ENCODE measurements at regions of chr11 and their contacts with region 1.

Region 1: GRCh38 chr11:43880640-43881159 is at the start of gene ALKBH3:
- DNase-seq: peak; percentile 86 to 96 (median 90)
- ATAC-seq: peak; percentile 98
- H3K4me3 ChIP-seq: peak within 1 kb of the TSS; percentile 81
- H3K4me3 Mint-ChIP-seq: peak within 1 kb of the TSS; percentile 91
- H3K27ac ChIP-seq: peak within 1 kb of the TSS in 1 of 2 donors; percentile 39
- H3K27ac Mint-ChIP-seq: peak within 1 kb of the TSS; percentile 71
- H3K4me1 ChIP-seq: peaks cover 15% of the 10 kb centered on the region
- H3K4me1 Mint-ChIP-seq: peaks cover 26% of the 10 kb centered on the region
- H3K27me3 ChIP-seq: peaks cover 11 to 22% of the 10 kb centered on the region in 2 experiments
- H3K27me3 Mint-ChIP-seq: peaks cover 23% of the 10 kb centered on the region
- CTCF ChIP-seq: no peak
- total RNA-seq, gene ALKBH3: 16.7 to 17.2 TPM

Region 2: GRCh38 chr11:43311791-43312607 is 568.7 kb before region 1 on chr11 and contains the start of gene API5:
- CTCF ChIA-PET with region 1: no interaction called
- POLR2A ChIA-PET with region 1: interaction called, 9 read pairs
- intact Hi-C with region 1: loop called in 1 of 2 experiments (anchors 5 kb)
- DNase-seq: peak; percentile 85 to 96 (median 90)
- ATAC-seq: peak; percentile 93
- H3K4me3 ChIP-seq: peak within 1 kb of the TSS; percentile 86
- H3K4me3 Mint-ChIP-seq: peak within 1 kb of the TSS; percentile 93
- H3K27ac ChIP-seq: peak within 1 kb of the TSS; percentile 45 to 71
- H3K27ac Mint-ChIP-seq: peak within 1 kb of the TSS; percentile 88
- H3K4me1 ChIP-seq: peaks cover 24% of the 10 kb centered on the region
- H3K4me1 Mint-ChIP-seq: peaks cover 55% of the 10 kb centered on the region
- H3K27me3 ChIP-seq: no peaks in the 10 kb centered on the region
- H3K27me3 Mint-ChIP-seq: no peaks in the 10 kb centered on the region
- CTCF ChIP-seq: peak; percentile 92
- total RNA-seq, gene API5: 67.8 to 70.3 TPM

Region 3: DNA sequence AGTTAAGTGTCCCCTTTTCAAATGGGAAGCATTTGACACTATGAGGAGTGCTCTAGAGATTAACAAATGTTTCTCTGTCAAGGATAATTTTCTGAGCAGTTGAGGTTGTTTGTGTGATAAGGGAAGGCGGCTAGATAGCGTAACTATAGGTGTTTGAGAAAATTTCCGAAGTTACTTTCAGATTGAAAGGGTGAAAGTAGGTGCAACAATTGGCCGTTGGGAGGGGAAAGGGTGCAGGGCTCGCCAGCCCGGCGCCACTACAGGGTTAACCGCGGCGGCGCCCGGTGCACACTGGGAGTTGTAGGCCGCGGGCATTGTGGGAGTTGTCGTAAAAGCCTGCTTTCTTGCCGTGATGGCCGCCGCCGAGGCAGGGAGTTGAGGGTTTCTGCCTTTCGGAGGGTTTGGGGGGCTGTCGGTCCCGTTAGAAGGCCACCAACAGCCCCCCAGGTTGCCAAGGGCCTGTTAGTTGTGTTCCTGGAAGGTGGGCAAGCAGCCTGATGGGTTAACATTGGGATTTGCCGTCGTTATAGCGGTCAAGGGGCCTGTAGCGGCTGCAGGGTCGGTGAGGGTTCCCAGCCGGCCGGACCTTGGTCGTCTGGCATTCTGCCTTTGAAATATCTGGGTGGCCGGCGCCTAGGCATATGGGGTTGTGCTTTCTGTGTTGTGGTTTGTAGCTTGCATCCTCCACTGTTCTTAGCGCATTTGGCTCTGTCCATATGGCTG is 236.6 kb before region 1 on chr11:
- CTCF ChIA-PET with region 1: no interaction called
- POLR2A ChIA-PET with region 1: no interaction called
- intact Hi-C with region 1: loop called in 1 of 2 experiments (anchors 2 kb)
- DNase-seq: peak; percentile 73 to 91 (median 80)
- ATAC-seq: peak; percentile 99
- H3K4me3 ChIP-seq: peak overlapping the region; percentile 85
- H3K4me3 Mint-ChIP-seq: peak overlapping the region; percentile 91
- H3K27ac ChIP-seq: peak overlapping the region in 1 of 2 donors; percentile 23
- H3K27ac Mint-ChIP-seq: peak overlapping the region; percentile 82
- H3K4me1 ChIP-seq: peaks cover 9% of the 10 kb centered on the region
- H3K4me1 Mint-ChIP-seq: peaks cover 22% of the 10 kb centered on the region
- H3K27me3 ChIP-seq: peaks cover 10 to 13% of the 10 kb centered on the region in 2 experiments
- H3K27me3 Mint-ChIP-seq: peaks cover 18% of the 10 kb centered on the region
- CTCF ChIP-seq: no peak

Region 4: DNA sequence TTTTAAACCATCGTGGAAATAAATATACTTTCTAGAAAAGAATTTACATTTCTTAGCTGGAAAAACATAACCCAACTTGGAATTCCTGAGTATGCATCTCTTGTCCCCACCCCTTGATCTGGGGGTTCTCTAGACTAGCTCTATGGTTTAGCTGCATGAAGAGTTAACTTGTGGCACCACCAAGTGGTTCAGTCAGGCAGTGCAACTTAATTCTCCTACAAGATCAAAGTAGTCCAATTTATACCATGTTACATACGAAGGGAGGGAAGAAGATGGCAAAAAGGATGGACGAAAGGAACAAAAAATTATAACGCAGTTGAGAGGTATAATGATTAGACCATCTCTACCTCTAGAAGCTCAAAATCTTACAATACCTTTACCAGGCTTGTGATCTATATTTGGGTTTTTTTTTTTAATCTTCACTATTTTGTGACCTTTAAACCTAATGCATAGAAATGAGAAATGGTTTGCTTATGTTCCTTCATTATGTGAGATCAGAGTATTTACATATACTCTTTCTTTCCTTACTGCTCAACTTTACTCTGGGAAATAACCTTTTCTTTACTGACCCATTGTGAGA is 28.6 kb before region 1 on chr11:
- CTCF ChIA-PET with region 1: no interaction called
- POLR2A ChIA-PET with region 1: no interaction called
- intact Hi-C with region 1: no loop called
- DNase-seq: peak; percentile 23 to 68 (median 44)
- ATAC-seq: peak; percentile 71
- H3K4me3 ChIP-seq: no peak overlapping the region
- H3K4me3 Mint-ChIP-seq: no peak overlapping the region
- H3K27ac ChIP-seq: no peak overlapping the region
- H3K27ac Mint-ChIP-seq: no peak overlapping the region
- H3K4me1 ChIP-seq: no peaks in the 10 kb centered on the region
- H3K4me1 Mint-ChIP-seq: no peaks in the 10 kb centered on the region
- H3K27me3 ChIP-seq: no peaks in the 10 kb centered on the region
- H3K27me3 Mint-ChIP-seq: no peaks in the 10 kb centered on the region
- CTCF ChIP-seq: peak; percentile 76

Region 5: DNA sequence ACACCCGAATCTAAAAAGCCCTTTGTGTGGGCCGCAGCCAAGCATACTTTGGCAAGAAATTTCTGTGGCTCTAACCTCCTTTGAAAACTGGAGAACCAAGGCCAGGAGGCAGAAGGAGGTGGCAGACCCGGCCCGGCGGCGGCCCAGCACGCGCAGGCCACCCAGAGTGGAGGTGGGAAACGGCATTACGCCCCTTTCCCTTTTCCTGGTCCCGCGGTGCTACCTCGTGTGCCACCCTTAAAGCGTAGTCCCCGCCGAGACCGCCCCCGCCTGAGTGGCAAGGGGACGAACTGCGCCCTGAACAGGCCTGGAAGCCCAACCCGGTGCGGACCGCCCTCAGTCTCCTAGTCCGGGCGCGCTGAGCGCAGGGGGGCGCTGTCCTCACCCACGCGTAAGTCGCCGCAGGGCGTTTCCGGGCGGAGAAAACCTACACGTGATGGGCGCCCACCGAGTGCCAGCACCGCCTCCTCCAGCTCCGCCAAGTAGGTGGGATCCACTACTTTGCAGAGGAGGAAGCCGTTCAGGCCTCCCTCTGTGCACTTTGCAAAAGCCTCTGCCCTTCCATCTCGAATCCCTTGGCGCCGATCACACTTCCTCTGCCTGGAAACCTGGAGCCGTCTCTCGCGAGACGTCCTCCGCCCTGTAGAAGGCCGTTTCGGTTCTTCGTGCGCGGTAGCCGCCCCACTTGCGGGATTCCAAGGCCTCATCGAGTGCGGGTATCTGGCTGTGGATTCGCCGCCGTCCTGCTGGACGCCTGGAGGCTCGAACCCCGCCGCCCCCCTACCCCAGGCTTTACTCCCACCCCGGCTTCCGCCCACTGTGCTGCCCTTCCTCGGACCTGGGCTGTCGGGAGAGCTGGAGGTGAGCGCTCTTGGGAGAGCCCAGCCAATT is 185.4 kb after region 1 on chr11 and contains the start of gene ACCS:
- CTCF ChIA-PET with region 1: no interaction called
- POLR2A ChIA-PET with region 1: no interaction called
- intact Hi-C with region 1: loop called in 1 of 2 experiments (anchors 5 kb)
- DNase-seq: peak; percentile 75 to 96 (median 86)
- ATAC-seq: peak; percentile 95
- H3K4me3 ChIP-seq: peak within 1 kb of the TSS; percentile 90
- H3K4me3 Mint-ChIP-seq: peak within 1 kb of the TSS; percentile 89
- H3K27ac ChIP-seq: peak within 1 kb of the TSS; percentile 59 to 65
- H3K27ac Mint-ChIP-seq: peak within 1 kb of the TSS; percentile 88
- H3K4me1 ChIP-seq: peaks cover 20% of the 10 kb centered on the region
- H3K4me1 Mint-ChIP-seq: peaks cover 30% of the 10 kb centered on the region
- H3K27me3 ChIP-seq: no peaks in the 10 kb centered on the region
- H3K27me3 Mint-ChIP-seq: no peaks in the 10 kb centered on the region
- CTCF ChIP-seq: peak; percentile 90
- total RNA-seq, gene ACCS: 17.7 to 18.7 TPM

Region 6: GRCh38 chr11:45147017-45147728 is 1266.5 kb after region 1 on chr11:
- CTCF ChIA-PET with region 1: no interaction called
- POLR2A ChIA-PET with region 1: no interaction called
- intact Hi-C with region 1: loop called in 1 of 2 experiments (anchors 10 kb)
- DNase-seq: peak; percentile 82 to 96 (median 91)
- ATAC-seq: peak; percentile 97
- H3K4me3 ChIP-seq: peak overlapping the region; percentile 72
- H3K4me3 Mint-ChIP-seq: peak overlapping the region; percentile 96
- H3K27ac ChIP-seq: peak overlapping the region; percentile 37 to 49
- H3K27ac Mint-ChIP-seq: peak overlapping the region; percentile 70
- H3K4me1 ChIP-seq: peaks cover 23% of the 10 kb centered on the region
- H3K4me1 Mint-ChIP-seq: peaks cover 39% of the 10 kb centered on the region
- H3K27me3 ChIP-seq: peaks cover 0 to 10% of the 10 kb centered on the region in 2 experiments
- H3K27me3 Mint-ChIP-seq: peaks cover 24% of the 10 kb centered on the region
- CTCF ChIP-seq: no peak